CD4-positive, alpha-beta memory T cell (primary cell): ENCODE measurements at regions of chr18 and their contacts with region 1.

Region 1: GRCh38 chr18:70621710-70622109 is 332.9 kb downstream of the SOCS6 start:
- DNase-seq: peak in 4 of 5 donors; percentile 22 to 33 (median 25)
- H3K4me3 ChIP-seq: peak overlapping the region in 1 of 2 donors; percentile 32
- H3K4me3 Mint-ChIP-seq: peak overlapping the region; percentile 83 to 93 (median 87)
- H3K27ac ChIP-seq: peak overlapping the region; percentile 41
- H3K27ac Mint-ChIP-seq: peak overlapping the region; percentile 86 to 97 (median 96)
- H3K4me1 ChIP-seq: peaks cover 56% of the 10 kb centered on the region
- H3K4me1 Mint-ChIP-seq: peaks cover 24 to 47% (median 35%) of the 10 kb centered on the region in 4 donors
- H3K27me3 ChIP-seq: no peaks in the 10 kb centered on the region
- H3K27me3 Mint-ChIP-seq: peaks cover 0 to 1% of the 10 kb centered on the region in 2 donors

Region 2: GRCh38 chr18:70645971-70646370 is 24.3 kb after region 1 on chr18:
- CTCF ChIA-PET with region 1: interaction called, 5 read pairs
- POLR2A ChIA-PET with region 1: interaction called, 23 read pairs
- intact Hi-C with region 1: no loop called
- DNase-seq: no peak
- H3K4me3 ChIP-seq: no peak overlapping the region
- H3K4me3 Mint-ChIP-seq: no peak overlapping the region
- H3K27ac ChIP-seq: no peak overlapping the region
- H3K27ac Mint-ChIP-seq: no peak overlapping the region
- H3K4me1 ChIP-seq: peaks cover 7% of the 10 kb centered on the region
- H3K4me1 Mint-ChIP-seq: peaks cover 5 to 10% (median 6%) of the 10 kb centered on the region in 4 donors
- H3K27me3 ChIP-seq: no peaks in the 10 kb centered on the region
- H3K27me3 Mint-ChIP-seq: no peaks in the 10 kb centered on the region

Region 3: GRCh38 chr18:70659036-70659925 is 37.6 kb after region 1 on chr18:
- CTCF ChIA-PET with region 1: interaction called, 7 read pairs
- POLR2A ChIA-PET with region 1: interaction called, 23 read pairs
- intact Hi-C with region 1: loop called (anchors 1 kb)
- DNase-seq: peak; percentile 68 to 80 (median 72)
- H3K4me3 ChIP-seq: no peak overlapping the region
- H3K4me3 Mint-ChIP-seq: peak overlapping the region; percentile 46 to 76 (median 70)
- H3K27ac ChIP-seq: peak overlapping the region; percentile 11
- H3K27ac Mint-ChIP-seq: peak overlapping the region; percentile 81 to 90 (median 87)
- H3K4me1 ChIP-seq: peaks cover 50% of the 10 kb centered on the region
- H3K4me1 Mint-ChIP-seq: peaks cover 23 to 36% (median 27%) of the 10 kb centered on the region in 4 donors
- H3K27me3 ChIP-seq: no peaks in the 10 kb centered on the region
- H3K27me3 Mint-ChIP-seq: no peaks in the 10 kb centered on the region

Region 4: DNA sequence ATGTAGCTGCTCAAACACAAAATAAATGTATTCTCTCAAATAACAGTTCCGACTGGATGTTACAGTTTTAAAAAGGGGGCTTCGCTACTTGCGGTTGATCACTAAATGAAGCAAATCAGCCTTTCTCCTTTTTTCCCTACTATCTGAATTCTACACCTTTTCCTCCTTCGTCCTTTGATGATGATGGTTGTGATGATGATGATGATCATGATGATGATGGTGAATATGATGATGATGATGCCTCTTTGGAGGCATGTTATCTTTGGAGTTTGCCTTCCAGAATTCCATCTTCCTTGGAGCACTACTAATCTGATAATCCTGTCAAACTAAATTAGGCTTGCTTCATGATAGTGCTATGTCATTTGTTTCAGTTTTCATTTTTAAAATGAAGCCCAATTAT is 740.4 kb after region 1 on chr18:
- CTCF ChIA-PET with region 1: no interaction called
- POLR2A ChIA-PET with region 1: no interaction called
- intact Hi-C with region 1: no loop called
- DNase-seq: no peak
- H3K4me3 ChIP-seq: no peak overlapping the region
- H3K4me3 Mint-ChIP-seq: no peak overlapping the region
- H3K27ac ChIP-seq: no peak overlapping the region
- H3K27ac Mint-ChIP-seq: no peak overlapping the region
- H3K4me1 ChIP-seq: no peaks in the 10 kb centered on the region
- H3K4me1 Mint-ChIP-seq: no peaks in the 10 kb centered on the region
- H3K27me3 ChIP-seq: no peaks in the 10 kb centered on the region
- H3K27me3 Mint-ChIP-seq: no peaks in the 10 kb centered on the region